Ovary (tissue), 10 donors: ENCODE measurements at regions of chr2 and their contacts with region 1.

Region 1: DNA sequence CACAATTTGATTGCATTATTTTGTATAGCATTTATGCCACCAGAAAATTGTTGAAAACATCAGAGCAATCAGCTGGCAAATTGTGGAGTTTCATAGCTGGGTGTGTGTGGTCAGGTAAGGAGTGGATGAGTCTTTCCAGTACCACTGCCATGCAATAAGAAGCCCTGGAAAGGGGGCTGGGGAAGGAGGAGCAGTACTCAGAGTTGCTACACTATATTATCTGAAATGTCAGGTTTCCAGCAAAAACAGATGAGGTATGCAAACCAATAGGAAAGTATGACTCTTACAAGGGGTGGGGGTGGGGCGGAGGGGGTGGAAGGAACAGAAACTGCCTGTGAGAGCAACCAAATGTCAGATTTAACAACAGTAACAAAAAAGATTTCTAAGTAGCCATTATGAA is 112.2 kb downstream of the SOS1 start:
- DNase-seq: no peak
- H3K4me3 ChIP-seq: no peak overlapping the region
- H3K27ac ChIP-seq: no peak overlapping the region
- H3K4me1 ChIP-seq: no peaks in the 10 kb centered on the region
- H3K27me3 ChIP-seq: no peaks in the 10 kb centered on the region
- CTCF ChIP-seq: no peak
- EP300 ChIP-seq: no peak
- POLR2A ChIP-seq: no peak

Region 2: GRCh38 chr2:38981003-38981669 is 27.5 kb before region 1 on chr2:
- intact Hi-C with region 1: loop called in 1 of 4 experiments (anchors 2 kb)
- DNase-seq: no peak
- H3K4me3 ChIP-seq: no peak overlapping the region
- H3K27ac ChIP-seq: no peak overlapping the region
- H3K4me1 ChIP-seq: no peaks in the 10 kb centered on the region
- H3K27me3 ChIP-seq: no peaks in the 10 kb centered on the region
- CTCF ChIP-seq: no peak
- EP300 ChIP-seq: no peak
- POLR2A ChIP-seq: no peak

Region 3: GRCh38 chr2:39024833-39025232 is 16.2 kb after region 1 on chr2:
- intact Hi-C with region 1: no loop called
- DNase-seq: no peak
- H3K4me3 ChIP-seq: no peak overlapping the region
- H3K27ac ChIP-seq: no peak overlapping the region
- H3K4me1 ChIP-seq: no peaks in the 10 kb centered on the region
- H3K27me3 ChIP-seq: no peaks in the 10 kb centered on the region
- CTCF ChIP-seq: no peak
- EP300 ChIP-seq: no peak
- POLR2A ChIP-seq: no peak